PC-9 (cell line): ENCODE measurements at regions of chr9 and their contacts with region 1.

Region 1: DNA sequence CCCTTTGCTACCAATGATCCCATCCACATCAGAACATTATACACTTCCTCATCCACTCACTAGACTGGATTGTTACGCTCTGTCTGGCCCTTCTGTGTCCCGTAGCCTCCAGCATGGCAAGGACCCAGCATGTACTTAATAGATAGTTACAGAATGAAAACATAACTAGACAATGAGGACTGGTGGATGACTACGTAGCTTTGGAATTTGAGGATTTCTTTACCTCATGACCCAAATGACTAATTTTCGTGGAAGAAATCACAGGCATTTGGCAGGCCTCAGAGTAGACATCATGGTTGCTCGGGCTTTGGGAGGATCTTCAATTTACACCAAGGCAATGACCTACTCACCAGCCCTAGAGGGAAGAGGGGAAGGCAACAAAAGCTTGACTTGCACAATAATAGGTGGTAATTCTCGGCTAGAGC is 299.8 kb downstream of the TLE1 start:
- DNase-seq: peak; percentile 78 to 96
- H3K4me3 ChIP-seq: no peak overlapping the region
- H3K27ac ChIP-seq: peak overlapping the region; percentile 66
- H3K4me1 ChIP-seq: peaks cover 40% of the 10 kb centered on the region
- H3K27me3 ChIP-seq: no peaks in the 10 kb centered on the region
- CTCF ChIP-seq: no peak

Region 2: DNA sequence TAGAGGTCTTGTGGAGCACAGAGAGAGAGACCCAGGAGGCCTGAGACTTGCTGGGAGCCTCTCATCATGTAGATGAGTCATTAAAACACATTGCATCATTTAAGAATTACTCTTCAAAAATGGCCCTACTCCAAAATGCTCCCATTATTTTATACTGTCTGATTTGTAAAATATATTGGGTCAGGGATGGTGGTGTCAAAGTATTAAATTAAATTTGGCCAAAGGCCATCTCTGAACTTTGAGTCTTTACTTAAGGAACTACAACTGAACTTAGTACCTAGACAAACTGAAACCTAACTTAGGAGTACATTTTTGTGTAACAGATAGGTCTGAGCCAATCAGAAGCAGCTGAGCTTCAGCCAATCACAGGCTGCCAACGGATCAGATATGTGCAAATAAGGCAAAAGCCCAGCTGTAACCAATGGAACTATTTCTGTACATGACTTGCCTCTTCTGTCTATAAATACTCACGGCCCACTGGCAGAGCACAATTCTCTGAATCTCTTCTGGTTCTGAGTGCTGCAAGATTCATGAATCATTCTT is 357.5 kb before region 1 on chr9:
- CTCF ChIA-PET with region 1: no interaction called
- POLR2A ChIA-PET with region 1: no interaction called
- intact Hi-C with region 1: loop called (anchors 2 kb)
- DNase-seq: no peak
- H3K4me3 ChIP-seq: no peak overlapping the region
- H3K27ac ChIP-seq: no peak overlapping the region
- H3K4me1 ChIP-seq: peaks cover 5% of the 10 kb centered on the region; the same call in 1 of the 2 replicates
- H3K27me3 ChIP-seq: no peaks in the 10 kb centered on the region
- CTCF ChIP-seq: no peak

Region 3: DNA sequence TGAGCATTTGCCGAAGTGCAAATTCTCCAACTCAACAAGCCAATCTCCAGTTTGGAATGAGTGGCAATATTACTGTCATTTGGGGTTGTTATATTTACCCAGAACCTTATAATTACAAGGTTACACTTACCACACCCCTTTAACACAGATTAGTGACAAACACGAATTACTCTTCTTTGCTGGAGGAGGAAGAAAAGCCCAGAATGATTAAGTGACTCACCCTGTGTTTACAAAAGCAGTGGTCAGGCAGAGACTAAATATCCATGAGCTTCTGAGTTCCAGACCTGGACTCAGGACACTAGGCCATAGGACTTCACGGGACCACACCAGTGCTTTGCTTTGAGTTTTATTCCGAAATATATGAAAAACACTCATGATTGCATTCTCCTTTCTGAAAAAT is 71.0 kb before region 1 on chr9:
- CTCF ChIA-PET with region 1: no interaction called
- POLR2A ChIA-PET with region 1: no interaction called
- intact Hi-C with region 1: loop called (anchors 1 kb)
- DNase-seq: peak; percentile 6 to 82
- H3K4me3 ChIP-seq: no peak overlapping the region
- H3K27ac ChIP-seq: peak overlapping the region; percentile 16; the same call in 1 of the 2 replicates
- H3K4me1 ChIP-seq: peaks cover 18% of the 10 kb centered on the region
- H3K27me3 ChIP-seq: no peaks in the 10 kb centered on the region
- CTCF ChIP-seq: no peak

Region 4: GRCh38 chr9:81410197-81410596 is 20.6 kb after region 1 on chr9:
- CTCF ChIA-PET with region 1: no interaction called
- POLR2A ChIA-PET with region 1: no interaction called
- intact Hi-C with region 1: loop called (anchors 1 kb)
- DNase-seq: peak; percentile 52 to 82
- H3K4me3 ChIP-seq: peak overlapping the region; percentile 36; the same call in 1 of the 2 replicates
- H3K27ac ChIP-seq: peak overlapping the region; percentile 40
- H3K4me1 ChIP-seq: peaks cover 15% of the 10 kb centered on the region
- H3K27me3 ChIP-seq: no peaks in the 10 kb centered on the region
- CTCF ChIP-seq: no peak

Region 5: DNA sequence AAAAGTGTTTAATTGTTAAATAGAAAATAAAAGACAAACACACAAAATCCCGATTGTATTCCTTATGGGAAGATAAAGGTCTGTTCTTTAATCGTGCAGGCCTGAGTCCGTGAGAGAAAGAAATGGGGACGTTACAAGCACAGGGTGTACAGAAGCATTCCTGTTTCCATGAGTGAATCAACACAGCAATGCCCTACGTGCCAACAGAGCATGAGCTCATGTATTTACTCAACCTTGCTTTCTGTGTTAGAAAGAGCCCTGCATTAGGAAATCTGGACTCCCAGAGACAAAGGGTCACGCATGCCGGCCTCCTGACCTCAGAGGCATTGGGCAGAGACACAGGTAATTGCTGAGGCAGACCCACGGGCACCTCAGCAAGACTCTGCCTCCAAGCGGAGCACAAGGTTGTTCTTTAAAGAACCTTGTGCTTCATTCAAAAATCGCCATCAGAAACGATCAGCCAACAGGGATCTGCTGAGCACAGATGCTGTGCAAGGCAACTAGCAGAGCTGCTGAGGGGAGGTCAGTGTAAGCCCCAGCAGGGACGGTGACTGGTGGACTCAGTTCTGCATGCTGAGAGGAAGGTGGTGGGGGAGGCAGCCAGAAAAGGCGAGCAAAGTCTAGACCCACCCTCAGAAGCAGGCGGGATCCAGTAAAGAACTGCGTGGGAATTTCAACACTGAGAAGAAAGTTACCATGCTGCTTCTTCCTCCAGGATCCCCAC is 198.7 kb after region 1 on chr9:
- CTCF ChIA-PET with region 1: no interaction called
- POLR2A ChIA-PET with region 1: no interaction called
- intact Hi-C with region 1: no loop called
- DNase-seq: peak in 1 of 2 experiments; percentile 56
- H3K4me3 ChIP-seq: no peak overlapping the region
- H3K27ac ChIP-seq: no peak overlapping the region
- H3K4me1 ChIP-seq: no peaks in the 10 kb centered on the region
- H3K27me3 ChIP-seq: no peaks in the 10 kb centered on the region
- CTCF ChIP-seq: no peak

Region 6: GRCh38 chr9:81848472-81848871 is 458.9 kb after region 1 on chr9:
- CTCF ChIA-PET with region 1: no interaction called
- POLR2A ChIA-PET with region 1: no interaction called
- intact Hi-C with region 1: loop called (anchors 10 kb)
- DNase-seq: no peak
- H3K4me3 ChIP-seq: no peak overlapping the region
- H3K27ac ChIP-seq: no peak overlapping the region
- H3K4me1 ChIP-seq: peaks cover 20% of the 10 kb centered on the region
- H3K27me3 ChIP-seq: no peaks in the 10 kb centered on the region
- CTCF ChIP-seq: peak; percentile 54; the same call in 1 of the 2 replicates